ENCODE measurements at regions of chr5 and their contacts with region 1.

Region 1: DNA sequence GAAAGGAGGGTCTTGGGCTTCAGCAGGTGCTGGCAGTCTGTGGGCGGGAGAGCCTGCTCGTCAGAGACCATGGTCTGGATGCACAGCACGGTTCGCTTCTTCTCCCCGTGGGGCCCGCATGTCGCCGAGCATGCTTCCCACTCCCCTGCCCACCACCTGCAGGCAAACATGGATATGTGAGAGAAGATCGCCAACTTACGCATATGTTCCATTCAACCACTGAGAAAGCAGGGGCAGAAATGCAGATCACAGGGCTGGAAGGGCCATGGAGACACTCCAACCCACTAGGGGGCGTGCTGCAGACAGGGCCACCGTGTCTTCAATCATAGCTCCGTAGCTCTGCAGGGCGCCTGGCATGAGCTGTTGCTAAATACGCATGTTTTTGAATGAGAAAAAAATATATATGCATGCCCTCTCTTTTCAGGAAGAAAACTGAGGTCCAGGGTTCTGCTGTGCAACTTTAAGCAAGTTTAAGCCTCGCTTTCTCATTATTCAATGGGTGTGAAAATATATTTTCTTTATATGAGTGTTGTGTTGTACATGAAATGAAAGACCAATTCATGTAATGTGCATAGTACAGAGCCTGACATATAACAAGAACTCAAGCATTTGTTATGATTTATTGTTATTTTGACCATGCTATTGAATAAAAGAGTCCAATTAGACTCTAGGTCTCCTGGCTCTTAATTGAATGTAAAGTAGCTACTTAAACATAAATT is 148.0 kb downstream of the TARS1 start:
- DNase-seq: peak; percentile 24
- CTCF ChIP-seq: peak; percentile 29

Region 2: GRCh38 chr5:33576726-33577590 is 11.9 kb before region 1 on chr5:
- CTCF ChIA-PET with region 1: interaction called, 13 read pairs
- POLR2A ChIA-PET with region 1: no interaction called
- DNase-seq: no peak
- CTCF ChIP-seq: no peak

Region 3: GRCh38 chr5:33601881-33602280 is 13.1 kb after region 1 on chr5:
- CTCF ChIA-PET with region 1: interaction called, 22 read pairs
- POLR2A ChIA-PET with region 1: no interaction called
- DNase-seq: no peak
- CTCF ChIP-seq: no peak

Region 4: GRCh38 chr5:33611877-33612276 is 23.1 kb after region 1 on chr5:
- CTCF ChIA-PET with region 1: interaction called, 11 read pairs
- POLR2A ChIA-PET with region 1: no interaction called
- DNase-seq: no peak
- CTCF ChIP-seq: no peak

Measured in GM10248 (cell line).